Uterus (tissue), 4 donors: ENCODE measurements at regions of chr5 and their contacts with region 1.

Region 1: DNA sequence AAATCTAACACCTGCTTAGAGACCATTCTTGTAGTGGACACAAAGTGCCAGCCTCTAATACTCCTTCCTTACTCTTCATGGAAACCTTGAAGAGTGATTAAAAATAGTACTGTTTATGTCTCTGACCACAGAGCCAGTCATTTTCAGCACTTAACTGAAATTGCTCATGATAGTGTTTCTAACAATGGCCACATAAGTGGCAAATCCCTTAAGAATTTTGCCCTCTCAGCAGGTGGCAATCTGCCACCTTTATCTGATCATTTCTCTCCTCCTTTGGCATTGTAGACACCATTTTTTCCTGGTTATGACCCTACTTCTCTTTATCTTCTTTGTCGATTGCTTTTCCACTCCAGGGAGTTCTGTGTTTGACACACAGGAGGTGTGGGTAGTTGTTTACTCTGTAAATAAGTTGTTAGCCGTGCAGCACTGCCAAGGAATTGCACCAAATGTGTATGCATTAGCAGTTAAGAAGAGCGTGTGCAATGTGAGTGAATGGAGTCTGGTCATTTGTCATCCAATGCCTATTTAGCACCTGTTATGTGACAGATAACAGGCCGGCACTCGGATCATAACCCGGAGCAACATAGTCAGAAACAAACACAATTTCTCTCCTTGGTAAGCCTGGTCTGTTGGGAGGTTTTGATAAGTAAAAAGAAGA is 36.8 kb upstream of the STARD4 start:
- DNase-seq: no peak
- H3K4me3 ChIP-seq: no peak overlapping the region
- H3K27ac ChIP-seq: no peak overlapping the region
- H3K4me1 ChIP-seq: peaks cover 0 to 4% of the 10 kb centered on the region in 2 donors
- H3K27me3 ChIP-seq: no peaks in the 10 kb centered on the region
- CTCF ChIP-seq: no peak
- POLR2A ChIP-seq: no peak

Region 2: DNA sequence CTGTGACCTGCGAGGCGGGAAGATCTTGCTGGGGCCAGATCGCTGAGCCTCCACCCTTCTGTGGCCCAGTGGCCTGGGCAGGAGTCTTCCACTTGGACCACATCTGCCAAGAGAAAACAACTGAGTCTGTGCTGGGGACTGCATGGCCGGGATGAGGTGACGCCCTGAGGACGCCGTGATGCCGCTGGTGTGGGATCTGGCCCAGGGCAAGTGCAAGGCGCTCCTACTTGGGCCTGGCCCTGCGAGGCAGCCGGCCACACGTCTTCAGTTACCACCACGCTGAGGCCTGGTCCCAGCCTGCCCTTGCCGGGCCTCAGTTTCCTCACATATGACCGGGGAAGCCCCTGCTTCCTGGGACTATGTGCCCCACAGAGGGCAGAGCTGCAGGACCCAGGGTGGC is 676.9 kb before region 1 on chr5:
- intact Hi-C with region 1: no loop called
- DNase-seq: no peak
- H3K4me3 ChIP-seq: no peak overlapping the region
- H3K27ac ChIP-seq: no peak overlapping the region
- H3K4me1 ChIP-seq: no peaks in the 10 kb centered on the region
- H3K27me3 ChIP-seq: no peaks in the 10 kb centered on the region
- CTCF ChIP-seq: no peak
- POLR2A ChIP-seq: no peak

Region 3: GRCh38 chr5:112097768-112098167 is 548.6 kb after region 1 on chr5:
- intact Hi-C with region 1: no loop called
- DNase-seq: no peak
- H3K4me3 ChIP-seq: no peak overlapping the region
- H3K27ac ChIP-seq: no peak overlapping the region
- H3K4me1 ChIP-seq: no peaks in the 10 kb centered on the region
- H3K27me3 ChIP-seq: no peaks in the 10 kb centered on the region
- CTCF ChIP-seq: no peak
- POLR2A ChIP-seq: no peak

Region 4: GRCh38 chr5:112146323-112147226 is 597.5 kb after region 1 on chr5:
- intact Hi-C with region 1: loop called (anchors 10 kb)
- DNase-seq: peak; percentile 48 to 67
- H3K4me3 ChIP-seq: no peak overlapping the region
- H3K27ac ChIP-seq: peak overlapping the region; percentile 46 to 47
- H3K4me1 ChIP-seq: no peaks in the 10 kb centered on the region
- H3K27me3 ChIP-seq: no peaks in the 10 kb centered on the region
- CTCF ChIP-seq: peak; percentile 84 to 94 (median 88)
- POLR2A ChIP-seq: no peak